ENCODE measurements at regions of chr12 and their contacts with region 1.

Region 1: GRCh38 chr12:114508529-114509129 is 102.7 kb upstream of the TBX5 start:
- DNase-seq: peak; percentile 66
- ATAC-seq: peak; percentile 39
- H3K4me3 ChIP-seq: no peak overlapping the region
- H3K4me3 Mint-ChIP-seq: no peak overlapping the region
- H3K27ac ChIP-seq: no peak overlapping the region
- H3K27ac Mint-ChIP-seq: no peak overlapping the region
- H3K4me1 ChIP-seq: no peaks in the 10 kb centered on the region
- H3K4me1 Mint-ChIP-seq: no peaks in the 10 kb centered on the region
- H3K27me3 ChIP-seq: no peaks in the 10 kb centered on the region
- H3K27me3 Mint-ChIP-seq: peaks cover 21% of the 10 kb centered on the region
- CTCF ChIP-seq: peak; percentile 71

Region 2: GRCh38 chr12:113965951-113966797 is 542.5 kb before region 1 on chr12 and contains the start of gene RBM19:
- CTCF ChIA-PET with region 1: interaction called, 20 read pairs
- POLR2A ChIA-PET with region 1: no interaction called
- intact Hi-C with region 1: no loop called
- DNase-seq: peak; percentile 98
- ATAC-seq: peak; percentile 99
- H3K4me3 ChIP-seq: peak within 1 kb of the TSS; percentile 81 to 99 (median 92)
- H3K4me3 Mint-ChIP-seq: peak within 1 kb of the TSS; percentile 99
- H3K27ac ChIP-seq: peak within 1 kb of the TSS; percentile 45 to 83
- H3K27ac Mint-ChIP-seq: peak within 1 kb of the TSS; percentile 96
- H3K4me1 ChIP-seq: peaks cover 17 to 21% of the 10 kb centered on the region in 2 donors
- H3K4me1 Mint-ChIP-seq: peaks cover 39% of the 10 kb centered on the region
- H3K27me3 ChIP-seq: no peaks in the 10 kb centered on the region
- H3K27me3 Mint-ChIP-seq: peaks cover 5% of the 10 kb centered on the region
- CTCF ChIP-seq: peak; percentile 98
- total RNA-seq, gene RBM19: 89.8 and 90.0 TPM in 2 replicates

Region 3: DNA sequence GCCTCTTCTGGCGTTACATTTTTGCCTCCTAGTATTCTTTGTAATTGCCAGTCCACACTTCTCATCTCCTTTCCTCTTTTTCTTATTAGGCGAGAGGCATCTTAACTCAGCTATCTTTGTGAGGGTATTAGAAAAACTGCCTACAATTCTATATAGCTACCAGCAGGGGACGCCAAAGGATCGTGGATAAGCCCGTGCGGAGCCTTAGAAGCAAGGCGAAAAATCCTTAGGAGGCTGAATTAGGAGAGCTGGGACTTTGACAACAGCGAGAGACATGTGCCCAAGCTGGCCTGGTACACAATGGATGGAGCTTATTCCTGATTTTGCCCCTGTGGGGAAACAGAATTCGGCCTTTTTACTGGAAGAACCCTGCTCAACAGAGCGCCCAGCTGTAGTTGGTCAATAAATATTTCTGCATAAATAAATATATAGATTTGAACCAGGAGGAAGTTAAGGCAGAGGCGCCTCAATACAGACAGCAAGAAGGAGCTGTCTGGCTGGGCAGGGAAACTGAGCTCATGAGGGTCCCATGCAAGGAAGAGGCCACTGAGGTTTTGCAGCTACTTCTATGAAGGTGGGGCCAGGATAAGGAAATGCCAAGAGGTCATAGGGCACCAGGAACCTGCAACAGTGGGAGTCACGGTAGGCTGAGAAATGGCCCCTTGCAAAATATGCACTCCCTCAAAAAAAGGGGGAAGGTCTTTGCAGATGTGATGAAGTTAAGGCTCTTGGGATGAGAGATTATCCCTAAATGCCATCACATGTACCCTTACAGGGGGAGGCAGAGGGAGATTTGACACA is 527.9 kb before region 1 on chr12:
- CTCF ChIA-PET with region 1: interaction called, 18 read pairs
- POLR2A ChIA-PET with region 1: no interaction called
- intact Hi-C with region 1: no loop called
- DNase-seq: peak; percentile 37
- ATAC-seq: no peak
- H3K4me3 ChIP-seq: no peak overlapping the region
- H3K4me3 Mint-ChIP-seq: no peak overlapping the region
- H3K27ac ChIP-seq: no peak overlapping the region
- H3K27ac Mint-ChIP-seq: no peak overlapping the region
- H3K4me1 ChIP-seq: no peaks in the 10 kb centered on the region
- H3K4me1 Mint-ChIP-seq: no peaks in the 10 kb centered on the region
- H3K27me3 ChIP-seq: peaks cover 0 to 22% (median 2%) of the 10 kb centered on the region in 4 experiments
- H3K27me3 Mint-ChIP-seq: peaks cover 28% of the 10 kb centered on the region
- CTCF ChIP-seq: peak; percentile 73

Region 4: GRCh38 chr12:114294303-114294685 is 214.3 kb before region 1 on chr12:
- CTCF ChIA-PET with region 1: no interaction called
- POLR2A ChIA-PET with region 1: no interaction called
- intact Hi-C with region 1: no loop called
- DNase-seq: no peak
- ATAC-seq: no peak
- H3K4me3 ChIP-seq: no peak overlapping the region
- H3K4me3 Mint-ChIP-seq: no peak overlapping the region
- H3K27ac ChIP-seq: no peak overlapping the region
- H3K27ac Mint-ChIP-seq: no peak overlapping the region
- H3K4me1 ChIP-seq: no peaks in the 10 kb centered on the region
- H3K4me1 Mint-ChIP-seq: no peaks in the 10 kb centered on the region
- H3K27me3 ChIP-seq: no peaks in the 10 kb centered on the region
- H3K27me3 Mint-ChIP-seq: peaks cover 8% of the 10 kb centered on the region
- CTCF ChIP-seq: no peak

Region 5: GRCh38 chr12:114408886-114409851 is 99.5 kb before region 1 on chr12:
- CTCF ChIA-PET with region 1: no interaction called
- POLR2A ChIA-PET with region 1: no interaction called
- intact Hi-C with region 1: no loop called
- DNase-seq: no peak
- ATAC-seq: no peak
- H3K4me3 ChIP-seq: peak overlapping the region in 1 of 5 experiments; percentile 8
- H3K4me3 Mint-ChIP-seq: peak overlapping the region; percentile 60
- H3K27ac ChIP-seq: no peak overlapping the region
- H3K27ac Mint-ChIP-seq: no peak overlapping the region
- H3K4me1 ChIP-seq: peaks cover 0 to 8% of the 10 kb centered on the region in 2 donors
- H3K4me1 Mint-ChIP-seq: peaks cover 7% of the 10 kb centered on the region
- H3K27me3 ChIP-seq: peaks cover 0 to 68% (median 54%) of the 10 kb centered on the region in 4 experiments
- H3K27me3 Mint-ChIP-seq: peaks cover 84% of the 10 kb centered on the region
- CTCF ChIP-seq: no peak

Region 6: DNA sequence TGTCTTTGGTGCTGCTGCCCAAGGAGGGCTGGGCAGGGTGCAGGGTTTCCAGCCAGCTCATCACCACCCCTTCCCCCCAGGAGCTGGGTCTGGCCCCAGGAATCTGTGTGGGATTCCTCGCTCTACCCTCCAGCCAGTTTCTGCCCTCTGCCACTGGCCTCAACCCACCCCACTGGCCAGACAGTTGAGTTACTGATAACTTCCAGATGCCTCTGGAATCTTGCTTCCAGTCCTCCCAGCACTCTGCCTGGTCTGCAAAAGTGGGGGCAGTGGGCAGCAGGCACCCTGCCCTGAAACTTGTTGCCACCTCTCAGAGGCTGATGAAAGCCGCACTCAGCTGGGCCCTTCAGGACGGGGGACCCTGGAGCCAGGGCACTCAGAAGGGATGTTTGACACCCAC is 195.5 kb after region 1 on chr12:
- CTCF ChIA-PET with region 1: no interaction called
- POLR2A ChIA-PET with region 1: no interaction called
- intact Hi-C with region 1: no loop called
- DNase-seq: no peak
- ATAC-seq: no peak
- H3K4me3 ChIP-seq: no peak overlapping the region
- H3K4me3 Mint-ChIP-seq: no peak overlapping the region
- H3K27ac ChIP-seq: no peak overlapping the region
- H3K27ac Mint-ChIP-seq: no peak overlapping the region
- H3K4me1 ChIP-seq: peaks cover 0 to 2% of the 10 kb centered on the region in 2 donors
- H3K4me1 Mint-ChIP-seq: no peaks in the 10 kb centered on the region
- H3K27me3 ChIP-seq: peaks cover 0 to 43% (median 14%) of the 10 kb centered on the region in 4 experiments
- H3K27me3 Mint-ChIP-seq: peaks cover 53% of the 10 kb centered on the region
- CTCF ChIP-seq: no peak